Naive thymus-derived CD4-positive, alpha-beta T cell (primary cell): ENCODE measurements at regions of chr6 and their contacts with region 1.

Region 1: GRCh38 chr6:29964887-29965562 is 22.7 kb downstream of the HLA-A start:
- DNase-seq: peak in 8 of 9 donors; percentile 55 to 89 (median 82)
- ATAC-seq: peak; percentile 97
- H3K4me3 ChIP-seq: peak overlapping the region; percentile 52
- H3K4me3 Mint-ChIP-seq: peak overlapping the region; percentile 73 to 96 (median 84)
- H3K27ac ChIP-seq: peak overlapping the region; percentile 52
- H3K27ac Mint-ChIP-seq: peak overlapping the region; percentile 77 to 94 (median 90)
- H3K4me1 ChIP-seq: peaks cover 22 to 30% of the 10 kb centered on the region in 2 donors
- H3K4me1 Mint-ChIP-seq: peaks cover 32 to 51% (median 46%) of the 10 kb centered on the region in 7 donors
- H3K27me3 ChIP-seq: no peaks in the 10 kb centered on the region
- H3K27me3 Mint-ChIP-seq: peaks cover 0 to 2% (median 0%) of the 10 kb centered on the region in 5 donors

Region 2: DNA sequence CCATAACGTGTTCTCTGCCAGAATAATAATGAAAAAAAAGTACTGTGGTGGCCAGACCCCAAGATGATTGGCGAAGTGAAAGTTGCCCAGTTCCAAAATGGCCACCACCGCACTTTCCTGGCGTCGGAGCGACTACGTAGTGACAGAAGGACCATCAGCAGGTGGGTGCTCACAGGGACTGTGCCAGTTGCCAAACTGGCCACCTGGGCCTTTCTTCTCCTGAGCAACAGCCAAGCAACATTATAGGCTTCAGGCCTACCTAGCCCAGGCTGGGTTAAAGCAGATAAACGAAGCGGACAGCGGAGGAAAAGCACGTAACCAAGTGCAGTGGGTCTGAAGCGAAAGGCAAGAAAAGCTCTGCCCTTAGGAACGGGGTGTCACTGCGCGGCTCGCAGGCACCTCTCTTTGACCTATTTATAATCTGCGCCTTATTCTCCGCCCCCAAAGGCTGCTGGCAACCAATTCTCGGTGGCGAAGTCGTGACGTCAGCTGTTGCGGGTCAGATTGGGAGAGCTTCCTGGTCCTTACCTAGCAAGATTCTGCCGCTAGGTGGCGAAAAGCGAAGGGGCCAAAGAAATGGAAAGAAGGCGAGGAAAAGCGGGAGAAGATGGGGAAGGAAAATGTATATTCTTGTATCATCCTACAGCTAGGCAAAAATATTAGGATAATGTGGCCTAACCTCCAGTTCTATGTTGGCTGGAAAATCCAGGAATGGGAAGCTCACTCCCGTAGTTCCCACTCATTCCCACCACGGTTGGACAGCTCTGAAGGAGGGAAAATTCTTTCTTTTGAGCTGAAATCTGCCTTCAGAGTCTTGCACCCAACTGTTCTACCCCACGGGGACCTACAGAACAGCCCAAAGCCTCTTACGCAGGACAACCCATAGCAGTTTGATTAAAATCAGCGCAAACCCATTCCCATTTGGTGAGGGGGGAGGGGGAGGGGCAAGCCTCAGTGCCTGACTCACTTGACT is 315.0 kb before region 1 on chr6:
- CTCF ChIA-PET with region 1: interaction called, 3 read pairs
- POLR2A ChIA-PET with region 1: no interaction called
- intact Hi-C with region 1: loop called in 1 of 2 experiments (anchors 5 kb)
- DNase-seq: peak; percentile 88 to 99 (median 97)
- ATAC-seq: peak; percentile 95
- H3K4me3 ChIP-seq: peak overlapping the region; percentile 83
- H3K4me3 Mint-ChIP-seq: peak overlapping the region; percentile 74 to 98 (median 96)
- H3K27ac ChIP-seq: peak overlapping the region; percentile 94
- H3K27ac Mint-ChIP-seq: peak overlapping the region; percentile 95 to 100 (median 100)
- H3K4me1 ChIP-seq: peaks cover 4 to 7% of the 10 kb centered on the region in 2 donors
- H3K4me1 Mint-ChIP-seq: peaks cover 5 to 21% (median 13%) of the 10 kb centered on the region in 7 donors
- H3K27me3 ChIP-seq: no peaks in the 10 kb centered on the region
- H3K27me3 Mint-ChIP-seq: peaks cover 0 to 11% (median 2%) of the 10 kb centered on the region in 5 donors

Region 3: DNA sequence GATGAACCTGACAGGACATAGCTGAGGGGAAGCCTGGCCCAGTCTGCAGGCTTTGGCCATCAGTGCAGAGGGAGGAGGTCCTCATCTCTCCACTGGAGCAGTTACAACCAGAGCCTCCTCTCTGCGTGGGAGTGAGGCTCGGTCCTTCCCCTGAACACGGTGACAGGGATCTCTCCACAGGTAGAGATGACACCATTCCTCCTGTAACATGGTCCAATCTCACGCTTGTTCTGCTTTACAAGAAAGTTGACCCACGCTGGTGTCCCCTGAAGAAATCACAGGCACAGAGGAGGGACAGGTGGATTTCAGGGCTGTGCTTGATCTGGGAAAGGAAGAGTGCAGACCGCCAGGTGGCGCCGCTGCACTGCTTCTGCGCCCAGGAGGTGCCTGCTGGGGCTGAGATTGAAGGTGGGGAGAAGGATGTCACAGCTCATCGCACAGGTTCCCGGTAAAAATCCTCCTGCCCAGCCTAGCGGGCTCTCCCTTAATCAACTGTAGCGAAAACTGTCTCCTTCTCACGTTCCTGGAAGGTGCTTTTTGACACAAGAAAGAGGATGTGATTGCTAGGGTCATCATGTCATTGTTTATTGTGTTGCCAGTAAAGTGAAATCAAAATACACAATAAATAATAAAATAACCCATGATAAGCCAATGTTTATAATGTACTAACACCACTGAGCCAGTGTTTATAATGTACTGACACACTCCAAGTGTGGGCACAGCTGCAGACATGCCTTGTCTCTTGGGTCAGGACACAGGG is 117.0 kb before region 1 on chr6:
- CTCF ChIA-PET with region 1: interaction called, 51 read pairs
- POLR2A ChIA-PET with region 1: interaction called, 8 read pairs
- intact Hi-C with region 1: loop called (anchors 1 kb)
- DNase-seq: peak; percentile 71 to 87 (median 80)
- ATAC-seq: peak; percentile 90
- H3K4me3 ChIP-seq: no peak overlapping the region
- H3K4me3 Mint-ChIP-seq: peak overlapping the region in 5 of 10 donors; percentile 5 to 49 (median 16)
- H3K27ac ChIP-seq: no peak overlapping the region
- H3K27ac Mint-ChIP-seq: peak overlapping the region in 1 of 9 donors; percentile 14
- H3K4me1 ChIP-seq: no peaks in the 10 kb centered on the region
- H3K4me1 Mint-ChIP-seq: peaks cover 0 to 24% (median 13%) of the 10 kb centered on the region in 7 donors
- H3K27me3 ChIP-seq: peaks cover 9 to 13% of the 10 kb centered on the region in 2 donors
- H3K27me3 Mint-ChIP-seq: peaks cover 54 to 73% (median 67%) of the 10 kb centered on the region in 5 donors

Region 4: GRCh38 chr6:29926413-29927274 is 38.4 kb before region 1 on chr6:
- CTCF ChIA-PET with region 1: interaction called, 7 read pairs
- POLR2A ChIA-PET with region 1: interaction called, 29 read pairs
- intact Hi-C with region 1: loop called (anchors 1 to 2 kb)
- DNase-seq: peak in 8 of 9 donors; percentile 40 to 90 (median 78)
- ATAC-seq: peak; percentile 96
- H3K4me3 ChIP-seq: peak overlapping the region; percentile 68
- H3K4me3 Mint-ChIP-seq: peak overlapping the region in 9 of 10 donors; percentile 83 to 97 (median 94)
- H3K27ac ChIP-seq: peak overlapping the region; percentile 95
- H3K27ac Mint-ChIP-seq: peak overlapping the region in 8 of 9 donors; percentile 90 to 99 (median 97)
- H3K4me1 ChIP-seq: peaks cover 4 to 15% of the 10 kb centered on the region in 2 donors
- H3K4me1 Mint-ChIP-seq: peaks cover 1 to 51% (median 15%) of the 10 kb centered on the region in 7 donors
- H3K27me3 ChIP-seq: no peaks in the 10 kb centered on the region
- H3K27me3 Mint-ChIP-seq: peaks cover 0 to 3% (median 0%) of the 10 kb centered on the region in 5 donors

Region 5: DNA sequence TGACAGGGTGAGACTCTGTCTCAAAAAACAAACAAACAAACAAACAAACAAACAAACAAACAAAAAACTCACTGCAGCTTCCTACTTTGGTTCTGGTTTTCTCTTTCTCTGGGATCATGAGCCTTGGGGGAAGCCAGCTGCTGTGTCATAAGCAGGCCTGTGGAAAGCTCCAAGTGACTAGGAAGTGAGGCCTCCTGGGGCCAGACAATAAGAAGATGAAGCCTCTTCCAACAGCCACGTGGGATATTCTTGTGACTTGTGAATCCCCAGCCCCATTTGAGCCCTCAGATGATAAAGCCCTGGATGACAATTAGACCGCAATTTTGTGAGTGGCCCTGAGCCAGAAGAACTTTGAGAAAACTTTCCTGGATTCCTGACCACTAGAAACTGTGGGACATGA is 11.3 kb before region 1 on chr6:
- CTCF ChIA-PET with region 1: interaction called, 4 read pairs
- POLR2A ChIA-PET with region 1: interaction called, 251 read pairs
- intact Hi-C with region 1: loop called in 1 of 2 experiments (anchors 1 kb)
- DNase-seq: no peak
- ATAC-seq: no peak
- H3K4me3 ChIP-seq: no peak overlapping the region
- H3K4me3 Mint-ChIP-seq: no peak overlapping the region
- H3K27ac ChIP-seq: no peak overlapping the region
- H3K27ac Mint-ChIP-seq: no peak overlapping the region
- H3K4me1 ChIP-seq: peaks cover 0 to 4% of the 10 kb centered on the region in 2 donors
- H3K4me1 Mint-ChIP-seq: peaks cover 4 to 40% (median 25%) of the 10 kb centered on the region in 7 donors
- H3K27me3 ChIP-seq: no peaks in the 10 kb centered on the region
- H3K27me3 Mint-ChIP-seq: no peaks in the 10 kb centered on the region

Region 6: GRCh38 chr6:30061092-30061857 is 96.2 kb after region 1 on chr6 and contains the start of gene POLR1H:
- CTCF ChIA-PET with region 1: no interaction called
- POLR2A ChIA-PET with region 1: interaction called, 10 read pairs
- intact Hi-C with region 1: loop called (anchors 1 to 2 kb)
- DNase-seq: peak; percentile 69 to 93 (median 86)
- ATAC-seq: peak; percentile 93
- H3K4me3 ChIP-seq: peak within 1 kb of the TSS; percentile 95
- H3K4me3 Mint-ChIP-seq: peak within 1 kb of the TSS; percentile 93 to 99 (median 98)
- H3K27ac ChIP-seq: peak within 1 kb of the TSS; percentile 92
- H3K27ac Mint-ChIP-seq: peak within 1 kb of the TSS; percentile 95 to 99 (median 99)
- H3K4me1 ChIP-seq: peaks cover 24 to 26% of the 10 kb centered on the region in 2 donors
- H3K4me1 Mint-ChIP-seq: peaks cover 17 to 63% (median 55%) of the 10 kb centered on the region in 7 donors
- H3K27me3 ChIP-seq: no peaks in the 10 kb centered on the region
- H3K27me3 Mint-ChIP-seq: no peaks in the 10 kb centered on the region
- total RNA-seq, gene POLR1H: 27.3 to 66.8 (median 45.0) TPM